Caco-2 (cell line): ENCODE measurements at regions of chr3 and their contacts with region 1.

Region 1: DNA sequence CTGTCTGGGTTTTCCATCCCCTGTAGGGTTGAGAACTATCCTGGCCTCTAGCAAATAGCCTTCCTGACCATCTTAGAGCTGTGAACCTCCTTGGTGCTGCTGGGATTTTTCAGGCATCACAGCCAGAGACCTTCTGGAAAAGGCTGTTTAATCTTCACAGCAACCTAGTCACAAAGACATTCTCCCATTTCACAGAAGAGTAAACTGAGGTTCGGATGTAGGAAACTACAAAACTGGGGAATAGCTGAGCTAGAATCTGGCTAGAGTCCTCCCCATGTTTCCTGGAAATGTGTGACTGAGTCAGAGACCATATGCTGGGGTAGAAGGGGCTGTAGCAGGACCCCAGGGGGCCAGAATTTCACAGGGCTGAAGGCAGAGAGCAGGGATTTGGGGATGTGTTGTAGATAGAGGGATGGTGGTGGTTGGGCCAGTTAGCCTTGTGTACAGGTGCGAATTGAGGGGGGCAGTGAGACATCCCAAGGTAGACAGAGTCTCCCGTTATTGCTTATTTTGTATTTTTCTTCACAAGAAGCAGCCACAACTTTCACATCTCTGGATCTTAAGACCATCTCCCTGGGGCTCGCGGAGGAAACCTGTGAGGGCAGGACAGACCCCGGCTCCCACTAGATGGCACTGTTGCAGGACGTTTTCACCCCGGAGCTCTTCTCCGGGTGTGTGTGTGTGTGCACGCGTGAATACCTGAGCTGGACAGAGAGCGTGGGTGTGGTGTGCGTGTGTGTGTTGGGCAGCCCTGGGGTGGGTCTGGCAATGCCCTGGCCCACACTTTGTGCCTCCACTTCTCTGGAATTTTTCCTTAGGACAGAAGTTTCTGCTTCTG is 66.9 kb upstream of the PRR23C start:
- DNase-seq: peak; percentile 69 to 79
- H3K4me3 ChIP-seq: no peak overlapping the region
- H3K4me3 Mint-ChIP-seq: no peak overlapping the region
- H3K27ac Mint-ChIP-seq: no peak overlapping the region
- H3K4me1 ChIP-seq: peaks cover 7% of the 10 kb centered on the region
- H3K4me1 Mint-ChIP-seq: peaks cover 5% of the 10 kb centered on the region
- H3K27me3 ChIP-seq: no peaks in the 10 kb centered on the region
- H3K27me3 Mint-ChIP-seq: no peaks in the 10 kb centered on the region
- CTCF ChIP-seq: peak; percentile 72 to 86

Region 2: DNA sequence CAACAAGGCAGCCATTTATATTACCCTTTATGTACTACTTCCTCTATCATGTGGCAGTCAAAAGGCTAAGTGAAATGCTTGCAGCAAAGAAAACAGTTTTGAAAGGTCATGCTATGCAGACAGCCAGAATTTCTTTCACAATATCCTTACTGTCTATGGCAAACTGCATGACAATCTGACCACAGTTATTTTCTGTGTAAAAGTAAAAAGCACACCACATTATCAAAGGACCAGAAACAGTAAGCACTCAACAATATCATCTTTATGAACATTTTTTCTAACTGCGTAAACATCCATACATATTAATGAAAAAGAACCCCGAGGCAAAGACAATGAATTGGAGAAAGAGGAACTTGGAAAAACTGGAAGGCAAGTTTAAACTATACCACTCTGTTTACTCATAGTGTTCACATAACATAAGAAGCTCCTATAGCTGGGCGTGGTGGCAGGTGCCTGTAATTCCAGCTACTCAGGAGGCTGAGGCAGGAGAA is 324.8 kb before region 1 on chr3:
- CTCF ChIA-PET with region 1: no interaction called
- POLR2A ChIA-PET with region 1: no interaction called
- intact Hi-C with region 1: no loop called
- DNase-seq: no peak
- H3K4me3 ChIP-seq: no peak overlapping the region
- H3K4me3 Mint-ChIP-seq: no peak overlapping the region
- H3K27ac Mint-ChIP-seq: no peak overlapping the region
- H3K4me1 ChIP-seq: no peaks in the 10 kb centered on the region
- H3K4me1 Mint-ChIP-seq: peaks cover 6% of the 10 kb centered on the region
- H3K27me3 ChIP-seq: no peaks in the 10 kb centered on the region
- H3K27me3 Mint-ChIP-seq: no peaks in the 10 kb centered on the region
- CTCF ChIP-seq: no peak

Region 3: DNA sequence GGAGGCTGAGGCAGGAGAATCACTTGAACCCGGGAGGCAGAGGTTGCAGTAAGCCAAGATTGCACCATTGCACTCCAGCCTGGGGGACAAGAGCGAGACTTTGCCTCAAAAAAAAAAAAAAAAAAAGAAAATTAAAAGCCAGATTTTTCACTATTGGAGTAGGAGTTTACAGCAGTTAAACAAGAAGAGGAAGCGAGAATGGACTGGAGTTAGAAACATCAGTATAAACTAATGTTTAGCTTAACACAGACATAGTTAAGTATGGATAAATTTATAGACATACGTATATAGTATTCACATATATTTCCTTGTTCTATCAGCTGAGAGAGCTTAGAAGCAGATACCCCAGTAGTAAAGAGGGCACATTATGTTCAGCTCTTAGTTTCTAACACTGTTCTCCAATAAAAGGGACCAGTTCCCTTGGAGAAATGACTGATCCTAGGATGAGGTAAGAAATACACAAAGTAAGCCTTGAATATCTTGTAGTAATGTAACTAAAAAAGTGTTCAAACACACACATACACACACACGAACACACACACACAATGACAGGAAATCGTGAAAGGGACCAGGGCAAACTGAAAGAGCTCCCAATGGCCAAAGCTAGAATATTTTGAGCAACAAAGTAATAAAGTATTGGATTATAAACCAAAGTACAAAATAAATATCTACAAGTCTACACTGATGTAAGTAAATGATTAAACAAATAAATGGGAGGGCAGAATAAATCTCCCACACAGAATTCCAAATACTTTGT is 301.9 kb before region 1 on chr3:
- CTCF ChIA-PET with region 1: no interaction called
- POLR2A ChIA-PET with region 1: no interaction called
- intact Hi-C with region 1: no loop called
- DNase-seq: no peak
- H3K4me3 ChIP-seq: no peak overlapping the region
- H3K4me3 Mint-ChIP-seq: no peak overlapping the region
- H3K27ac Mint-ChIP-seq: no peak overlapping the region
- H3K4me1 ChIP-seq: no peaks in the 10 kb centered on the region
- H3K4me1 Mint-ChIP-seq: no peaks in the 10 kb centered on the region
- H3K27me3 ChIP-seq: no peaks in the 10 kb centered on the region
- H3K27me3 Mint-ChIP-seq: no peaks in the 10 kb centered on the region
- CTCF ChIP-seq: no peak

Region 4: GRCh38 chr3:139101396-139101795 is 10.2 kb before region 1 on chr3:
- CTCF ChIA-PET with region 1: interaction called, 13 read pairs
- POLR2A ChIA-PET with region 1: no interaction called
- intact Hi-C with region 1: no loop called
- DNase-seq: no peak
- H3K4me3 ChIP-seq: no peak overlapping the region
- H3K4me3 Mint-ChIP-seq: no peak overlapping the region
- H3K27ac Mint-ChIP-seq: no peak overlapping the region
- H3K4me1 ChIP-seq: peaks cover 23% of the 10 kb centered on the region
- H3K4me1 Mint-ChIP-seq: peaks cover 9% of the 10 kb centered on the region
- H3K27me3 ChIP-seq: no peaks in the 10 kb centered on the region
- H3K27me3 Mint-ChIP-seq: no peaks in the 10 kb centered on the region
- CTCF ChIP-seq: no peak

Region 5: GRCh38 chr3:139159356-139159755 is 47.7 kb after region 1 on chr3:
- CTCF ChIA-PET with region 1: no interaction called
- POLR2A ChIA-PET with region 1: no interaction called
- intact Hi-C with region 1: no loop called
- DNase-seq: no peak
- H3K4me3 ChIP-seq: no peak overlapping the region
- H3K4me3 Mint-ChIP-seq: no peak overlapping the region
- H3K27ac Mint-ChIP-seq: no peak overlapping the region
- H3K4me1 ChIP-seq: no peaks in the 10 kb centered on the region
- H3K4me1 Mint-ChIP-seq: no peaks in the 10 kb centered on the region
- H3K27me3 ChIP-seq: no peaks in the 10 kb centered on the region; the same call in 1 of the 2 replicates
- H3K27me3 Mint-ChIP-seq: peaks cover 24% of the 10 kb centered on the region
- CTCF ChIP-seq: no peak

Region 6: GRCh38 chr3:139187650-139188049 is 76.0 kb after region 1 on chr3:
- CTCF ChIA-PET with region 1: interaction called, 17 read pairs
- POLR2A ChIA-PET with region 1: no interaction called
- intact Hi-C with region 1: no loop called
- DNase-seq: peak in 1 of 2 experiments; percentile 45
- H3K4me3 ChIP-seq: no peak overlapping the region
- H3K4me3 Mint-ChIP-seq: no peak overlapping the region
- H3K27ac Mint-ChIP-seq: no peak overlapping the region
- H3K4me1 ChIP-seq: no peaks in the 10 kb centered on the region
- H3K4me1 Mint-ChIP-seq: no peaks in the 10 kb centered on the region
- H3K27me3 ChIP-seq: no peaks in the 10 kb centered on the region
- H3K27me3 Mint-ChIP-seq: no peaks in the 10 kb centered on the region
- CTCF ChIP-seq: no peak

Region 7: GRCh38 chr3:139202226-139202958 is 90.8 kb after region 1 on chr3:
- CTCF ChIA-PET with region 1: interaction called, 13 read pairs
- POLR2A ChIA-PET with region 1: no interaction called
- intact Hi-C with region 1: loop called (anchors 2 kb)
- DNase-seq: peak; percentile 68 to 75
- H3K4me3 ChIP-seq: no peak overlapping the region
- H3K4me3 Mint-ChIP-seq: no peak overlapping the region
- H3K27ac Mint-ChIP-seq: no peak overlapping the region
- H3K4me1 ChIP-seq: no peaks in the 10 kb centered on the region
- H3K4me1 Mint-ChIP-seq: no peaks in the 10 kb centered on the region
- H3K27me3 ChIP-seq: no peaks in the 10 kb centered on the region
- H3K27me3 Mint-ChIP-seq: no peaks in the 10 kb centered on the region
- CTCF ChIP-seq: peak; percentile 22 to 65

Region 8: DNA sequence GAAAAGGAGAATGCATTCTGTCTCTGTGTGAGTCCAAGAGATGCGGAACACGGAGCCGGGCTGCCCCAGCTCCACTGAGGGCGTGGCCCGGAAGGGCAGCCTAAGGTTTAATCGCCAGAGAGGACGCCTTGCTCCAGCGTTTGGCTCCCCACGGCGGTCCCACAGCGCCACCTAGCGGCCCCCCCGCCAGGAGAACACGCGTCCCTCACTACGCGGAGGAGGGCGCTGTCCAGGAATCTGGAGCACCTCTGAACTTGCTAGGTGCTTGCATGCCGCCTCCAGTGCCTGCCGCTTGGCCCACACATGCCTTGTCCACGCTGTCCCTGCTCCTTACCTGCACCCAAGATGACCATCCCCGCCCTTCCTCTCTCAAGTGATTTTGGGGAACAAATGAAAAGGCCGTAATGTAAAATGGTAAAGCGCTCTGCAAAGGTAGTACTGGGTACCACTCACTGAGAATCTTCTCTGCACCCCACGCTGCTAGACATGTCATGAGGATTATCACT is 217.8 kb after region 1 on chr3:
- CTCF ChIA-PET with region 1: interaction called, 42 read pairs
- POLR2A ChIA-PET with region 1: no interaction called
- intact Hi-C with region 1: loop called (anchors 2 kb)
- DNase-seq: peak; percentile 88 to 95
- H3K4me3 ChIP-seq: peak overlapping the region; percentile 19
- H3K4me3 Mint-ChIP-seq: peak overlapping the region; percentile 46
- H3K27ac Mint-ChIP-seq: no peak overlapping the region
- H3K4me1 ChIP-seq: no peaks in the 10 kb centered on the region; the same call in 1 of the 2 replicates
- H3K4me1 Mint-ChIP-seq: no peaks in the 10 kb centered on the region
- H3K27me3 ChIP-seq: no peaks in the 10 kb centered on the region; the same call in 1 of the 2 replicates
- H3K27me3 Mint-ChIP-seq: peaks cover 12% of the 10 kb centered on the region
- CTCF ChIP-seq: peak; percentile 97 to 99